CD8-positive, alpha-beta memory T cell (primary cell): ENCODE measurements at regions of chr17 and their contacts with region 1.

Region 1: GRCh38 chr17:28849281-28849680 is 5.5 kb upstream of the ERAL1 start:
- DNase-seq: no peak
- H3K4me3 ChIP-seq: no peak overlapping the region
- H3K4me3 Mint-ChIP-seq: peak overlapping the region in 1 of 7 donors; percentile 5
- H3K27ac ChIP-seq: no peak overlapping the region
- H3K27ac Mint-ChIP-seq: no peak overlapping the region
- H3K4me1 ChIP-seq: peaks cover 2% of the 10 kb centered on the region
- H3K4me1 Mint-ChIP-seq: peaks cover 2 to 3% (median 2%) of the 10 kb centered on the region in 3 donors
- H3K27me3 ChIP-seq: no peaks in the 10 kb centered on the region
- H3K27me3 Mint-ChIP-seq: no peaks in the 10 kb centered on the region

Region 2: GRCh38 chr17:28896884-28897768 is 47.8 kb after region 1 on chr17 and contains the start of gene FLOT2:
- CTCF ChIA-PET with region 1: interaction called, 10 read pairs
- POLR2A ChIA-PET with region 1: interaction called, 14 read pairs
- DNase-seq: peak; percentile 49 to 81 (median 68)
- H3K4me3 ChIP-seq: peak within 1 kb of the TSS; percentile 93
- H3K4me3 Mint-ChIP-seq: peak within 1 kb of the TSS; percentile 88 to 99 (median 97)
- H3K27ac ChIP-seq: peak within 1 kb of the TSS; percentile 84
- H3K27ac Mint-ChIP-seq: peak within 1 kb of the TSS; percentile 94 to 98 (median 96)
- H3K4me1 ChIP-seq: peaks cover 72% of the 10 kb centered on the region
- H3K4me1 Mint-ChIP-seq: peaks cover 62 to 80% (median 66%) of the 10 kb centered on the region in 3 donors
- H3K27me3 ChIP-seq: no peaks in the 10 kb centered on the region
- H3K27me3 Mint-ChIP-seq: no peaks in the 10 kb centered on the region
- total RNA-seq, gene FLOT2: 113 to 115 TPM

Region 3: DNA sequence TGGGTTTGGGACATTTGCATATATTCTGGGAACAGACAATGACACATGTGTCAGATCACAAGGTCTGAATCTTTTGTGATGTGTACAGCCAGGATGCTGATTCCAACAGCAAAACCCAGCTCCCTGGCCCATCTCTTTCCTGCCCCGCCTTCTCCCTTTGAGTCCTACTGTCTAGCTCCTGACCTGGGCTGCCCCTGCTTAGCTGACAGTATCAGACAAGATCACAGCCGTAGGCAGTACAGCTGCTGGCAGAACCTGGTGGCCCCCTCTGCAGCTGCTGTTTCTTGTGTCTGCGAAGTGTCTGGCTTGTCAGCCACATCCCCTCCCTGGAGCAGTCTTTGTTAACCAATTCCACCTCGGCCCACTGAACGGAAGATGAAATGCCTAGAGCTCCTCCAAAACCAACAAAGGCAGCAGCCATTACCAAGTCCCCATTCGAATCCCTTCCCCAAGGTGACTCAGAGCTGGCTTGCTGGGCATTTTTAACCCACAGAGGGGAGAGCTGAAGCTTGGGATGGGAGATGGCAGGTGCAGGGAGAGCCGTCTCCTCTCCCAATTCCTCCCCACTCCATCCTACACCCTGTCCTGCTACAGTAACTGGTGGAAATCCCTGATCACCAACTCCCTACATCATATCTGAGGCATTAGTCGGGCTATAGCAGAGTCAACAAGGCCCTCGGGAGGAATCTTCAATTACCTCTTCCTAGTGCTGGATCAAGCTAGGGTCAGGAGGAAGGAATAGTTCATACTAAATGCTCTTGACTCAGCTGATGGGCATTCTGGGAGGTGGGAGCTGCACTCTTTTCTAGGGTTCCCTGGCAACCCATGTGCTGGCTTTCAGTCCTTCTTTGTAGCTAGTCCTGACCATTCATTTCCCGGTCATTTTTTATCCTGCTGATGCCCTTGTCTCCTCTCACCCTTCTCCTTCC is 199.4 kb after region 1 on chr17:
- CTCF ChIA-PET with region 1: no interaction called
- POLR2A ChIA-PET with region 1: no interaction called
- DNase-seq: no peak
- H3K4me3 ChIP-seq: no peak overlapping the region
- H3K4me3 Mint-ChIP-seq: no peak overlapping the region
- H3K27ac ChIP-seq: no peak overlapping the region
- H3K27ac Mint-ChIP-seq: no peak overlapping the region
- H3K4me1 ChIP-seq: no peaks in the 10 kb centered on the region
- H3K4me1 Mint-ChIP-seq: no peaks in the 10 kb centered on the region
- H3K27me3 ChIP-seq: no peaks in the 10 kb centered on the region
- H3K27me3 Mint-ChIP-seq: peaks cover 18 to 36% of the 10 kb centered on the region in 2 donors